Activated B cell treated with CpG ODN at 0.5 μM for 24 hours (primary cell): ENCODE measurements at regions of chr1 and their contacts with region 1.

Region 1: GRCh38 chr1:206808615-206809014 is 36.3 kb upstream of the IL10 start:
- DNase-seq: no peak
- ATAC-seq: peak; percentile 94
- H3K4me3 Mint-ChIP-seq: no peak overlapping the region
- H3K27ac Mint-ChIP-seq: no peak overlapping the region
- H3K4me1 Mint-ChIP-seq: peaks cover 32% of the 10 kb centered on the region
- H3K27me3 Mint-ChIP-seq: no peaks in the 10 kb centered on the region
- CTCF ChIP-seq: no peak

Region 2: GRCh38 chr1:206658264-206658980 is 150.2 kb before region 1 on chr1:
- CTCF ChIA-PET with region 1: interaction called, 10 read pairs
- POLR2A ChIA-PET with region 1: no interaction called
- intact Hi-C with region 1: loop called (anchors 1 kb)
- DNase-seq: peak; percentile 52
- ATAC-seq: peak; percentile 85
- H3K4me3 Mint-ChIP-seq: peak overlapping the region; percentile 58
- H3K27ac Mint-ChIP-seq: no peak overlapping the region
- H3K4me1 Mint-ChIP-seq: peaks cover 15% of the 10 kb centered on the region
- H3K27me3 Mint-ChIP-seq: peaks cover 4% of the 10 kb centered on the region
- CTCF ChIP-seq: no peak

Region 3: DNA sequence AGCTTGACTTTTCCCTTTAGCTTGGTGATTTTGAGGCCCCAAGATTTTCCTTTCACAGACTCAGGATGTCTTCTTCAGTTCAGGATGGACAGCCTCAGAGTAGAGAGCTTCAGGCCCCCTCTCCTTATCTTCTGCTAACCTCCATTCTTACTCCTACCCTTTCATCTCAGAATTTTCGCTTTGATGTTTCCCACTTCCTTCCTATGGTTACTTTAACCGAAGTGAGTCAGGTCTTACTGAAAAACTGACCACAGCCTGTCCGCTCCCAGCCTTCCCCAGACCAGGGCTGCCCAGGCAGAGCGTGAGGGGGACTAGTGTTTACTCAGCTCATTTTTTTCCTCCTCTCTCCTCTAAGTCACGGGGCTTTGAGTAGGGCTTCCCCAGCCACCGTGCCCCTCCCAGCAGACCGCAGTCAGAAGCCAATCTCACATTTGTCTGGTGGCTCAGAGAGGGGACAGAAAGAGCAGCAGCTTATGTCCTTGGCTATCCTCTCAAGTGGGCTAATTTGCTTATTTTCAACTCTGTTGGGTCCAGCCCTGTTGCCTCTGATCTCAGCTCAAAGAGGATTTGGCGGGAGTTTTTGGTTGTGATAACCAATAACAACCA is 42.3 kb before region 1 on chr1:
- CTCF ChIA-PET with region 1: interaction called, 3 read pairs
- POLR2A ChIA-PET with region 1: interaction called, 4 read pairs
- intact Hi-C with region 1: loop called (anchors 5 kb)
- DNase-seq: no peak
- ATAC-seq: peak; percentile 64
- H3K4me3 Mint-ChIP-seq: peak overlapping the region; percentile 42
- H3K27ac Mint-ChIP-seq: peak overlapping the region; percentile 73
- H3K4me1 Mint-ChIP-seq: peaks cover 51% of the 10 kb centered on the region
- H3K27me3 Mint-ChIP-seq: no peaks in the 10 kb centered on the region
- CTCF ChIP-seq: no peak

Region 4: GRCh38 chr1:206790502-206791250 is 17.9 kb before region 1 on chr1:
- CTCF ChIA-PET with region 1: interaction called, 8 read pairs
- POLR2A ChIA-PET with region 1: interaction called, 4 read pairs
- intact Hi-C with region 1: loop called (anchors 1 kb)
- DNase-seq: no peak
- ATAC-seq: peak; percentile 59
- H3K4me3 Mint-ChIP-seq: peak overlapping the region; percentile 78
- H3K27ac Mint-ChIP-seq: peak overlapping the region; percentile 94
- H3K4me1 Mint-ChIP-seq: peaks cover 76% of the 10 kb centered on the region
- H3K27me3 Mint-ChIP-seq: no peaks in the 10 kb centered on the region
- CTCF ChIP-seq: no peak

Region 5: DNA sequence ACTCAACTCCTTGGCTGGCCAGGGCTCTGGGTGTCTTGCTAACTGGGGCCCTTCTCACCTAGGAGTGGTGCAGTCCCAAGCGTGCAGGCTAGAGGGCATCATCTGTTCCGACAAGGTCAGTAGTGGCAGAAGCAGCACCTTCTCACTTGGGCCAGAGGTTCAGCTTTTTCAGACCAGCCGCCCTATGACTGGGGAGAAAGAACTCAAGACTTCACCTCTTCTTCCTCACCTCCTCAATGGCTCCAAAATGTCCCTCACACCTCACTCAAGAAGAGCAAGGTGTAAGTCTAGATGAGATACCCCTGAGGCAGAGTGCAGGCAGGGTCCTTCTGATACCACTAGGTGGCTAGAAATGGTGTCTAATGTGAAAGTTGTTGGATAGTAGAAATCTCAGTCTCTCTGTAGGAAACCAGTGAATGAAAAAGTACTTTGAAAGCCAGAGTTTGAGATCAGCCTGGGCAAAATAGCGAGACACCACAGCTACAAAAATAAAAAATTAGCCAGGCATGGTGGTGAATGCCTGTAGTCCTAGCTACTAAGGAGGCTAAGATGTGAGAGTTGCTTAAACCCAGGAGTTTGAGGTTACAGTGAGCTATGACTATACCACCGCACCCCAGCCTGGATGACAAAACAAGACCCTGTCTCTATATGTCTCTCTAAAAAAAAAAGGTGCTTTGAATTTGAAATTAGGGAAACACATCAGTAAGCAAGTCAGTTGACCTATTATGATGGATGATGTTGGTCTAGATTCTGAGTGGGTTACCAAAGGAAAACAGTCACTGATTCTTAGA is 48.3 kb after region 1 on chr1:
- CTCF ChIA-PET with region 1: interaction called, 10 read pairs
- POLR2A ChIA-PET with region 1: no interaction called
- intact Hi-C with region 1: loop called (anchors 10 kb)
- DNase-seq: no peak
- ATAC-seq: peak; percentile 78
- H3K4me3 Mint-ChIP-seq: no peak overlapping the region
- H3K27ac Mint-ChIP-seq: no peak overlapping the region
- H3K4me1 Mint-ChIP-seq: peaks cover 6% of the 10 kb centered on the region
- H3K27me3 Mint-ChIP-seq: peaks cover 12% of the 10 kb centered on the region
- CTCF ChIP-seq: no peak

Region 6: DNA sequence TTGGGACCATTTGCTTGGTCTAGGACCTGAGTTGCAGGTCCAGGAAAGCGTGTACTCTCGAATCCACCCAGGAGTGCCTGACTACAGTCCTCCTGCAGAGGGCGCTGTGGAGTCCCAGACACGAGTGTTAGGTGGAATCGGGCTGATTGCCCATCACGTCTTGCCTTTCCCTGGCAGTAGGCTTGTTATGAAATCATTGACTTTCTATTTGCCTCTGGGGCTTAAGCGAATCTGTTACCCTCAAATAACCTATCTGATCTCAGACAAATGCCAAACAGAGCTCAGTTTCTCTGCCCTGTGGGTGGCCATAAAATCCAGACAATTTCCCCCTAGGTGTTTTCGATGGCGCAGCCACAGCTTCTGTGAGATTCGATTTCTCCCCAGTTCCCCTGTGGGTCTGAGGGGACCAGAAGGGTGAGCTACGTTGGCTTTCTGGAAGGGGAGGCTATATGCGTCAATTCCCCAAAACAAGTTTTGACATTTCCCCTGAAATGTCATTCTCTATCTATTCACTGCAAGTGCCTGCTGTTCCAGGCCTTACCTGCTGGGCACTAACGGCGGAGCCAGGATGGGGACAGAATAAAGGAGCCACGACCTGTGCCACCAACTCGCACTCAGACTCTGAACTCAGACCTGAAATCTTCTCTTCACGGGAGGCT is 56.5 kb after region 1 on chr1 and contains the start of gene IL20:
- CTCF ChIA-PET with region 1: interaction called, 3 read pairs
- POLR2A ChIA-PET with region 1: no interaction called
- intact Hi-C with region 1: loop called (anchors 10 kb)
- DNase-seq: peak; percentile 72
- ATAC-seq: peak; percentile 90
- H3K4me3 Mint-ChIP-seq: no peak within 1 kb of the TSS
- H3K27ac Mint-ChIP-seq: no peak within 1 kb of the TSS
- H3K4me1 Mint-ChIP-seq: peaks cover 6% of the 10 kb centered on the region
- H3K27me3 Mint-ChIP-seq: peaks cover 26% of the 10 kb centered on the region
- CTCF ChIP-seq: peak; percentile 43
- total RNA-seq, gene IL20: not detected in 2 replicates

Region 7: GRCh38 chr1:206935491-206936067 is 127.0 kb after region 1 on chr1:
- CTCF ChIA-PET with region 1: interaction called, 12 read pairs
- POLR2A ChIA-PET with region 1: no interaction called
- intact Hi-C with region 1: loop called (anchors 1 kb)
- DNase-seq: peak; percentile 41
- ATAC-seq: no peak
- H3K4me3 Mint-ChIP-seq: no peak overlapping the region
- H3K27ac Mint-ChIP-seq: no peak overlapping the region
- H3K4me1 Mint-ChIP-seq: peaks cover 34% of the 10 kb centered on the region
- H3K27me3 Mint-ChIP-seq: no peaks in the 10 kb centered on the region
- CTCF ChIP-seq: no peak

Region 8: GRCh38 chr1:207423560-207424292 is 615.1 kb after region 1 on chr1:
- CTCF ChIA-PET with region 1: no interaction called
- POLR2A ChIA-PET with region 1: no interaction called
- intact Hi-C with region 1: no loop called
- DNase-seq: no peak
- ATAC-seq: peak; percentile 29
- H3K4me3 Mint-ChIP-seq: peak overlapping the region; percentile 73
- H3K27ac Mint-ChIP-seq: peak overlapping the region; percentile 65
- H3K4me1 Mint-ChIP-seq: peaks cover 63% of the 10 kb centered on the region
- H3K27me3 Mint-ChIP-seq: no peaks in the 10 kb centered on the region
- CTCF ChIP-seq: no peak